Dendritic cell treated with granulocyte-macrophage colony-stimulating factor and Interleukin-4, amounts not matched to agents 40 ng/mL and 50 ng/mL, for 4 days (primary cell): ENCODE measurements at regions of chr14 and their contacts with region 1.

Region 1: GRCh38 chr14:58501214-58501816 is 73.8 kb downstream of the KIAA0586 start:
- H3K4me3 Mint-ChIP-seq: no peak overlapping the region
- H3K27ac Mint-ChIP-seq: no peak overlapping the region
- H3K4me1 Mint-ChIP-seq: no peaks in the 10 kb centered on the region
- H3K27me3 Mint-ChIP-seq: no peaks in the 10 kb centered on the region

Region 2: DNA sequence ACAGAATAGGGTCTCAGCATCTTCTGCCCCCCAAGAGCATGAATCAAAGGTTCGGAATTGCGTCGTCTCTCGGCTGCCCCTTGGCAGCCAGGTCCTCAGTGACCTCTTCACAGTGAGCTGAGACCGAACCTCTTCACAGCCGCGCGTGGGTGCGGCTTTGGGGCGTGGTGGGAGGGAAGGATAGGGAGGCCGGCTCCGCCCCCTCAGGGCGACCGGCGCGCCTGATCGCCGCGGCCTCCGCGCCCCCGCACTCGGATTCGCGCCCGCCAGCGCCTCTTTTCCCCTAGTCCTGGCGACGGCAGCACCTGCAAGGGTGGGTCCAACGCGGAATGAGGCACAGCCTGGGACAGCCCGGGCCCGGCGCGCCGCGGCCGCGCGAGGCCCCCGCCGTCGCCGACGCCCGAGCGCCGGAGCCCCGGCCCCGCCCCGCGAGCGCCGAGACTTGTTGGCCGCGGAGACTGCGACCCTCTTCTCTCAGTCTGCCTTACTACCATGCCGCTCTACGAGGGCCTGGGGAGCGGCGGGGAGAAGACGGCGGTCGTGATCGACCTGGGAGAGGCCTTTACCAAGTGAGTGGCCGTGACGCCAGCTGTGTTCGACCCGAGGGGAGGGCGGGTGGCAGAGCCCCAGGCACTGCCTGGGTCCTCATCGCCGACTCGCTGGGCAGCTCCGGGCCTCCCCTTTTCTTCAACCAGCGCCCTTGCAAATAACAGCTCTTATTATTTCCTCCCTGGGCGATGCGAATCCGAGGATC is 301.4 kb before region 1 on chr14 and contains the start of gene ACTR10:
- intact Hi-C with region 1: no loop called
- H3K4me3 Mint-ChIP-seq: peak within 1 kb of the TSS; percentile 95
- H3K27ac Mint-ChIP-seq: peak within 1 kb of the TSS; percentile 98
- H3K4me1 Mint-ChIP-seq: peaks cover 10% of the 10 kb centered on the region
- H3K27me3 Mint-ChIP-seq: peaks cover 12% of the 10 kb centered on the region

Region 3: DNA sequence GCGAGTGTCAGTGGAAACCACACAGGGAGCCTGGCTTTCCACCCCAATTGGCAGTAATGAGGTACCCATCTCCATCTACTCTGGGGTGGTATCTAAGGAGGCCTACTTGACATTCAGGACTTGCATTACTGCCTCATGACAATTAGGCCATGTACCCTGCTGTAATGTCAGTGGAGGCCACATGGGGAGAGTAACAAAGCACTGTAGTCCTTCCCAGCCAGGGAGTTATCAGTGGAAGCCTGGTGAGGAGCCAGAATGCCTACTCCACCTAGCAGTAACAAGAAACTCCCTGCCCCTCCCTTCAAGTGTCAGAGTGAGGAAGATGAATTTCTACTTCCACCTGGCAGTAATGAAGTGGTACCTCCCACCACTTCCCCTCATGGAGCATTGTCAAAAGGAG is 86.5 kb before region 1 on chr14:
- intact Hi-C with region 1: no loop called
- H3K4me3 Mint-ChIP-seq: no peak overlapping the region
- H3K27ac Mint-ChIP-seq: no peak overlapping the region
- H3K4me1 Mint-ChIP-seq: peaks cover 14% of the 10 kb centered on the region
- H3K27me3 Mint-ChIP-seq: no peaks in the 10 kb centered on the region

Region 4: GRCh38 chr14:58444627-58445026 is 56.7 kb before region 1 on chr14:
- intact Hi-C with region 1: no loop called
- H3K4me3 Mint-ChIP-seq: no peak overlapping the region
- H3K27ac Mint-ChIP-seq: no peak overlapping the region
- H3K4me1 Mint-ChIP-seq: peaks cover 6% of the 10 kb centered on the region
- H3K27me3 Mint-ChIP-seq: no peaks in the 10 kb centered on the region

Region 5: DNA sequence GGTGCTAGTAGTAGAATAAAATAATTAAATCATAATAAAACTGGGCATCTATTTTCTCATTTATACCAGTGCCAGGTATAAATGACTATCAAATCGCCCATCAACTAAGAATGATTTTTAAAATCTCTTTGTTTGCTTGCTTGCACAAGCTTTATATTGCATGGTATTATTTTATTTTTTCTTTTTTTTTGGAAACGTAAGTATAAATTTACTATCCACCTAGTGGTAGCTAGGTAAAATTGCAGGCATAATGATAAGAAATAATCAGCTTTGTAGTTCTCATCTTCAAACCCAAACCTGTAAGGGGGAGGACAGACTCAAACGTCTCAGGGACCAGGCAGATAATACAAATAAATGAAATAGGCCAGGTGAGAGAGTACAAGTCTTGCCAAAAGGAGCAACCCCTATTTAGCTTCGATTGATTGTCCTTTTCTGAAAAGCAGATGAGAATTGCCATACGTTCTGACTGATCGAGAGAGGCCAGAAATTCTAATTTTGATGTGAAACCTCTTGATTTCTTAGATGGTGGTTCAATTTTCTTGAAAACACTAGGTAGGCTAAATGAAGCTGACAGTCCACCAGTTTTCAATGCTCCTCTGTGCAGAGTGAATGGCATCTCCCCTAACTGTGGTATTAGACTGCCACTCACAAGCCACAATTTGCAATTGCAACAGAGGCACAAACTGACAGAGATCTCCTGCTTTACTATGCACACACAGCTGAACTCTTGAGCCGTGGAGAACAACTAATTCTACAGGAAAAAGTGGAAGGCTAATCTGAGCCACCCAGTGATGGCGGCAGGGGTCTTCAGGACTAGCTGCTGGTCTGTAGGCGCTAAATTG is 325.8 kb after region 1 on chr14:
- intact Hi-C with region 1: loop called (anchors 5 kb)
- H3K4me3 Mint-ChIP-seq: no peak overlapping the region
- H3K27ac Mint-ChIP-seq: no peak overlapping the region
- H3K4me1 Mint-ChIP-seq: peaks cover 5% of the 10 kb centered on the region
- H3K27me3 Mint-ChIP-seq: no peaks in the 10 kb centered on the region

Region 6: GRCh38 chr14:59055439-59056045 is 554.2 kb after region 1 on chr14:
- intact Hi-C with region 1: loop called (anchors 1 kb)
- H3K4me3 Mint-ChIP-seq: no peak overlapping the region
- H3K27ac Mint-ChIP-seq: no peak overlapping the region
- H3K4me1 Mint-ChIP-seq: no peaks in the 10 kb centered on the region
- H3K27me3 Mint-ChIP-seq: no peaks in the 10 kb centered on the region